IMR-90 (cell line): ENCODE measurements at regions of chr15 and their contacts with region 1.

Region 1: DNA sequence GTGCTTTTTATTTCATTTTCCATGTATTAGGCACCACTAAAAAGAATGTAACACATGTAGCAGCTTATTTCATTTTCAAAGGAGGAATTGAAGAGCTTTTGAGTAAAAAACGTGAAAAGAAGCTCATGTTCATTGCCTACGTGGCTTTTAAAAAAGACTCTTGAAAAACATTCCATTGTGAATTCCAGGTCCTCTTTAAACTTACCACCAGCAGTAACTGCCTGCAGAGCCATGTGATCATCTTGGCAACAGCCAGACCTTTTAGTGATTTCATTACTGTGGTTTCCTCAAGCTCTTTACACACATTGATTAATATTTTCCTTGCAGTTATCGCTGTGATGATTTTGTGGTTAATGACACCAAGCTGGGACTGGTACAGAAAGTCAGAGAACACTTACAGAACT is 43.8 kb upstream of the FBXL22 start:
- DNase-seq: peak; percentile 97
- ATAC-seq: peak; percentile 86
- H3K4me3 ChIP-seq: peak overlapping the region; percentile 18; the same call in 1 of the 2 replicates
- H3K27ac ChIP-seq: peak overlapping the region; percentile 65; the same call in 1 of the 2 replicates
- H3K4me1 ChIP-seq: no peaks in the 10 kb centered on the region
- H3K27me3 ChIP-seq: no peaks in the 10 kb centered on the region
- CTCF ChIP-seq: no peak
- POLR2A ChIP-seq: no peak
- RAD21 ChIP-seq: peak; percentile 5; the same call in 1 of the 2 replicates

Region 2: DNA sequence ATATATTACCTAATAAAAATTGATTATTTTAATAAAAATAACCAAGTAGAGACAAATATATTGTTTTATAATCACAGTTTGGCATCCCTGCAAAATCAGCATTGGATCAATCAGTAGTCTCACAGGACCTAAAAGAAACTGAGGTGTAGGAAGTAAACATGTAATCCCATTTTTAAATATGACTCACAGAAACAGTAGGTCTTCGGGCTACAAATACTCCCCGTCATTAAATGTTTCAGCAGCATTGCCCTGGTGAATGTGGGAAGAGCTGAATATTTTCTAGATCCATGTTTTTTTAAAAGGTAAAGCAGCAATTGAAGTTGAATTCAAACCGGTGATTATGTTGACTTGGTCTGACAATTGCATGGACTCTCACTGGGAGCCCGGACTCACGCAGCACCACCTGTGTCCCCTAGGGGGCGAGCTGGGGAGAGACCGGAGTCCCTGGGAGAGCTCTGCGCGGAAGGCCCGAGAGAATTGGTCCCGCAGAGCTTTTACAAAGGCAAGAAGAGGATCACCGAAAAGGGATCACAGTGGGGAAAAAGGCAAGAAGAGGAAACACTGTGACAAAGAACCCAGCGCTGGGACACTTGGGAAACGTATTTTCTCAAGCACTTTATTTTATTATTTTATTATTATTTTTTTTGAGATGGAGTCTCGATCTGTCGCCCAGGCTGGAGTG is 66.2 kb before region 1 on chr15:
- CTCF ChIA-PET with region 1: no interaction called
- POLR2A ChIA-PET with region 1: no interaction called
- dilution Hi-C with region 1: no loop called
- in situ Hi-C with region 1: no loop called
- intact Hi-C with region 1: no loop called
- DNase-seq: peak; percentile 61
- ATAC-seq: peak; percentile 87
- H3K4me3 ChIP-seq: no peak overlapping the region
- H3K27ac ChIP-seq: no peak overlapping the region
- H3K4me1 ChIP-seq: peaks cover 8% of the 10 kb centered on the region
- H3K27me3 ChIP-seq: no peaks in the 10 kb centered on the region
- CTCF ChIP-seq: peak; percentile 77
- POLR2A ChIP-seq: no peak
- RAD21 ChIP-seq: peak; percentile 67

Region 3: DNA sequence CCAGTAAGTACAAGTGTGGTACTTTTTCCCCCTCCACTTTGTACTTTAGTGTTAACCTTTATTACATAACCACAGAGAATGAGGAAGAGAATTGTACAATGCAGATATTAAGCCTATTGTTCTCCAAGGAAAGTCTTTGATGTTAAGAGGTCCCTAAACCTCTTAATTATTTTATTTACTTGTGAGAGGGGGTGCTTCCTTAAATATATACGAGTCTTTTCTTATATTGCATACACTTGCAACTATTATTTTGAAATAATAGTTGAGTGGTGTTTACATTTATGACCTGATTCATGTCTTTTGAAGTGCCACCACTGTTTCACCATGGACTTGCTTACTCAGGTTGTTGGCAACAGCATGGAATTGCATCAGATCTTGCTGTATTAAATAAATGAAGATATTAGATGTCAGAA is 38.9 kb before region 1 on chr15:
- CTCF ChIA-PET with region 1: no interaction called
- POLR2A ChIA-PET with region 1: no interaction called
- dilution Hi-C with region 1: no loop called
- in situ Hi-C with region 1: loop called (anchors 5 kb)
- intact Hi-C with region 1: no loop called
- DNase-seq: peak; percentile 88
- ATAC-seq: peak; percentile 22; the same call in 1 of the 2 replicates
- H3K4me3 ChIP-seq: no peak overlapping the region
- H3K27ac ChIP-seq: no peak overlapping the region
- H3K4me1 ChIP-seq: peaks cover 9% of the 10 kb centered on the region
- H3K27me3 ChIP-seq: no peaks in the 10 kb centered on the region
- CTCF ChIP-seq: no peak
- POLR2A ChIP-seq: no peak
- RAD21 ChIP-seq: no peak

Region 4: DNA sequence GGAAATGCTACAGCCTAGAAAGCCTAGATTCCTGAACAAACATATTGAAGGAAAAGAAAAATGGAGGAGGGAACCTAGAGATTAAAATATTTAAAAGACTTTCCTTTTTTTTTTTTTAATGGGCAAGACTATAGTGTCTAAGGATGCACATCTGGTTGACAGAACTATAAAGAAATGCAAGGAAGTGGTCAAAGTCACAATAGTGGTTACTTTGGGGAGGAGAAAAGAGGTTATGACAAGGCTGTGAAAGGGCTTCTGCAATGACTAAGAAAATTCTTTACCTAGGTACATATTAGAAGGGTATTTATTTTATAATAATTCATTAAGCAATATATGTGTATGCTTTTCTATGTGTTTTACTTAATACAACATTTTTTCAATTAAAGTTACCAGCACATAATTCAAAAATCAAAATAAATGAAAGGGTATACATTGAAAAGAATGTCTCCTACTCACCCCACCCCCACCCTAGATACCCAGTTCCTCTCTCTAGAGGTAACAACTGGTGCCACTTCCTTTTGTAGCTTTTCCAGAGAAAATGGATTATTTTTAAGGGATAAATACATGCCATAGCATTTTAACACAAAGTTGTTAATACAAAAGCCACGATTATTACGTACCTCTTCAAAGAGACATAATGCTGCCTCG is 210.2 kb after region 1 on chr15:
- CTCF ChIA-PET with region 1: no interaction called
- POLR2A ChIA-PET with region 1: no interaction called
- dilution Hi-C with region 1: no loop called
- in situ Hi-C with region 1: no loop called
- intact Hi-C with region 1: no loop called
- DNase-seq: peak; percentile 39
- ATAC-seq: no peak
- H3K4me3 ChIP-seq: no peak overlapping the region
- H3K27ac ChIP-seq: no peak overlapping the region
- H3K4me1 ChIP-seq: peaks cover 4% of the 10 kb centered on the region; the same call in 1 of the 2 replicates
- H3K27me3 ChIP-seq: no peaks in the 10 kb centered on the region
- CTCF ChIP-seq: no peak
- POLR2A ChIP-seq: no peak
- RAD21 ChIP-seq: no peak